Upper lobe of right lung (tissue), 1 donor: ENCODE measurements at regions of chr11 and their contacts with region 1.

Region 1: GRCh38 chr11:65988791-65989592 is 13.0 kb downstream of the EIF1AD start:
- DNase-seq: no peak
- ATAC-seq: peak; percentile 99
- H3K4me3 ChIP-seq: no peak overlapping the region
- H3K27ac ChIP-seq: no peak overlapping the region
- H3K4me1 ChIP-seq: no peaks in the 10 kb centered on the region
- H3K27me3 ChIP-seq: no peaks in the 10 kb centered on the region
- CTCF ChIP-seq: peak; percentile 94

Region 2: GRCh38 chr11:65884686-65885092 is 104.3 kb before region 1 on chr11:
- intact Hi-C with region 1: loop called (anchors 5 kb)
- DNase-seq: peak; percentile 90
- ATAC-seq: peak; percentile 64
- H3K4me3 ChIP-seq: no peak overlapping the region
- H3K27ac ChIP-seq: no peak overlapping the region
- H3K4me1 ChIP-seq: peaks cover 20% of the 10 kb centered on the region
- H3K27me3 ChIP-seq: no peaks in the 10 kb centered on the region
- CTCF ChIP-seq: peak; percentile 99